ENCODE measurements at regions of chr5 and their contacts with region 1.

Region 1: DNA sequence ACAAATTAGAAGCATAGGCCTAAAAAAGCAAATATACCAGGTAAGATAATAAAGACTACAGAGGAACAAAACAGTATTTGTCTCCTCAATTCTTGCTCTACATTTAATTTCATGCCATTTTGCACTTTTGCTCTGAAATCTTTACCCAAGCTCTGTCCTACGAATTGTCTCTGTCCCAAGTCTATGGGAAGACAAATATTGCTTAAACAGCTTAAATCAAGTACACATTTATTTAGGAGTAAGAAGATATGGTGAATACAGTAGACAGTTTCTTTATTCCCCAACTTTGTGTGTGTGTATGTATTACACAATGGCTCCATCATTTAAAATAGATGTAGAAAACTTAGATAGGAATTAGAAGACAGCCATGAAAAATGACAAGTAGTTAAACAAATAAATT is 163.5 kb upstream of the POU5F2 start:
- H3K4me3 ChIP-seq: no peak overlapping the region
- H3K27ac ChIP-seq: no peak overlapping the region
- H3K4me1 ChIP-seq: no peaks in the 10 kb centered on the region
- CTCF ChIP-seq: no peak

Region 2: GRCh38 chr5:93894601-93895354 is 10.1 kb before region 1 on chr5:
- CTCF ChIA-PET with region 1: interaction called, 11 read pairs
- POLR2A ChIA-PET with region 1: no interaction called
- H3K4me3 ChIP-seq: no peak overlapping the region
- H3K27ac ChIP-seq: no peak overlapping the region
- H3K4me1 ChIP-seq: peaks cover 7% of the 10 kb centered on the region; the same call in 1 of the 2 replicates
- CTCF ChIP-seq: no peak

Region 3: GRCh38 chr5:93967923-93968322 is 63.0 kb after region 1 on chr5:
- CTCF ChIA-PET with region 1: no interaction called
- POLR2A ChIA-PET with region 1: no interaction called
- H3K4me3 ChIP-seq: no peak overlapping the region
- H3K27ac ChIP-seq: no peak overlapping the region
- H3K4me1 ChIP-seq: peaks cover 6% of the 10 kb centered on the region
- CTCF ChIP-seq: no peak